Esophagus muscularis mucosa (tissue), 4 donors: ENCODE measurements at regions of chr7 and their contacts with region 1.

Region 1: DNA sequence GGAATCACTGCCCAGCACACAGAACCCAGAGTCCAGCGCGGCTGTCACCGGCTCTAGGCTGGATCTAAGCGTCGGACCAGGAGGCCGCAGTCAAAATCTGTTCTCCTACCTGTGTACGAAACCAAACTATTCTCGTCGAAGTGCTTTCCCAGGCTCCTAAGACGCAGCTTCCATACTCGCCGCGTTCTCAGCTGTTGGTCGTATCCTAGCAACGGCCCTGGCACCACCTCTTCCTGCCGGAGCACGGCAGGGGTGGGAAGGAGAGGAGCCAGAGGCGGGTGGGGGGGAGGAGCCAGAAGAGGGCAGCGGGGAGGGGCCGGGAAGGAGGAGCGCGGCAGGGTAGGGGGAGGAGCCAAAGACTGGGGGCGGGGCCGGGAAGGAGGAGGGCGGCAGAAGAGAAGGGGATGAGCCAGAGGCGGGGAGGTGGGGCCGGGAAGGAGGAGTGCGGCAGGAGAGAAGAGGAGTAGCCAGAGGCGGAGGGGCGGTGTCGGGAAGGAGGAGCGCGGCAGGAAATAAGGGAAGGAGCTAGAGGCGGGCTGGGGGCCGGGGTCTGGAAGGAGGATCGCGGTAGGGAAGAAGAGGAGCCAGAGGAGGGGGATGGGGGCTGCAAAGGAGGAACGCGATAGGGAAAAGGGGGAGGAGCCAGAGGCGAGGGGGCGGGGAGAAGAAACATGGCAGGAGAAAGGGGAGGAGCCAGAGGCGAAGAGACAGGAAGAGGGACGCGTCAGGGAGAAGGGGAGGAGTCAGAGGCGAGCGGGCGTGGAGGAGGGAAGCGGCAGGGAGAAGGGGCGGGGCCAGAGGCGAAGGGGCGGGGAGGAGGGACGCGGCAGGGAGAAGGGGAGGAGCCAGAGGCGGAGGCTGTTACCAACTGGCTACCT is at the start of gene IQUB:
- DNase-seq: peak; percentile 99
- H3K4me3 ChIP-seq: peak within 1 kb of the TSS; percentile 64 to 75 (median 66)
- H3K27ac ChIP-seq: peak within 1 kb of the TSS; percentile 86 to 94 (median 92)
- H3K4me1 ChIP-seq: peaks cover 17 to 31% (median 27%) of the 10 kb centered on the region in 4 donors
- H3K27me3 ChIP-seq: no peaks in the 10 kb centered on the region
- CTCF ChIP-seq: no peak
- EP300 ChIP-seq: no peak
- POLR2A ChIP-seq: no peak
- total RNA-seq, gene IQUB: 0.83 to 13.3 (median 6.7) TPM

Region 2: DNA sequence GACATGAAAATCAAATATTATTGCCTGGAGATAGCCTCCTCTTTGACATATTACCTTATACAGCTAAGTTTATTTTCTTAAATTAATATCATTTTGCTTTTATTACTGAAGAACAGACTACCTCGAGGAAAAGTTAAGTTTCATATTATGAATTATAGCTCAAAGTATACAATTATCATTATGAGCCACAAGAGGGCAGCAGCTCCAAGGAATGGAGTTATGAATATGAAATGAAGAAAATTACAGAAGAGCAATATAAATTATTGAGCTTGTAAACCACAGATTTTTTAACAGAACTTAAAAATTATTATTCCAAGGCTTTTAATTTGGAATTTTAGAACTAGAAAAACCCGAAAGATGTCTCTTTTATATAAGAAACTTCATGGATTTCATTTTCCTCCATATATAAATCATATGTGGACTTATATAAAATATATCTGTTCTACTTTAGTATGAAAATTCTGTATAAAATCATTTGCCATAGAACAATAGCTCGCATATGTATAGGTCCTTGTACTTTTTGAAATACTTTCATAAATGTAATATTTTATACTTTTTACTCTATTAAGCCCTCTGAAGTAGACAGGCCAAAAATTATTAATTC is 40.3 kb before region 1 on chr7:
- intact Hi-C with region 1: loop called (anchors 5 kb)
- DNase-seq: no peak
- H3K4me3 ChIP-seq: no peak overlapping the region
- H3K27ac ChIP-seq: no peak overlapping the region
- H3K4me1 ChIP-seq: peaks cover 0 to 15% (median 2%) of the 10 kb centered on the region in 4 donors
- H3K27me3 ChIP-seq: no peaks in the 10 kb centered on the region
- CTCF ChIP-seq: peak; percentile 67 to 75 (median 69)
- EP300 ChIP-seq: no peak
- POLR2A ChIP-seq: no peak